IMR-90 (cell line): ENCODE measurements at regions of chr3 and their contacts with region 1.

Region 1: DNA sequence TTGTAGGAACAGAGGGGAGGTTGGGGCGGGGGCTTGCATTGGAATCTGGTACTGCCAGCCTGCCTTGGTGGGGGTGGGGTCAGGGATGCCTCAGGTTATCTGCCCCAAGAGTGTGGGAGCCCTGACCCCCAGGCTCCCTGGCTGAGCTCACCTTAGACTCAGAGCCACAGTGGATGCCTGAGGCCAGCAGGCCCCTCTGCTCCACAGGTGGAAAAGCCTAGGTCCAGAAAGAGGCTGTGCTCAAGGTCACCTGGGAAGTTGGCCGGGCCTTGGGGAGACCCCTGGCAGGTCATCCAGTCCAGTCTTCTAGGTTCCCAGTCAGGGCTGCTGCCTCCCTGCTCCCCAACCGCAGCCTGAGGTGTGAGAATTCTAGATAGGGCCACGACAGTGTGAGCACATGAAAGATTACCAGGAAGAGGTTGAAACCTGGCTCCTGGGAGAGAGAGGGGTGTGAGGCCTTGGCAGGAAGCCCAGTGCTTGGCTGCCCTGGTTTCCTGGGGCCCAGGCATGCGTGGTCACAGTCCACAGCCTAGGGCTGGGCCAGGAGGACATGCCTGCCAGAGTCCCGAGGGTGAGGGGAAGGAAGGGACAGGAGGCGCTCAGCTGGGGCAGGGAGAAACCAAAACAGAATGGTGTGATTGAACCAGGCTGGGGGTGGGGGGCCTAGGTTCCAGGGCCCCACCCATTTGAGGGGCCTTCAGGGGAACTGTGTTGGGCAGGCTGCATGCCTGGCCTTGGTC is 4.9 kb downstream of the HDAC11 start:
- DNase-seq: peak; percentile 33
- ATAC-seq: peak; percentile 33
- H3K4me3 ChIP-seq: no peak overlapping the region
- H3K27ac ChIP-seq: no peak overlapping the region
- H3K4me1 ChIP-seq: peaks cover 12% of the 10 kb centered on the region; the same call in 1 of the 2 replicates
- H3K27me3 ChIP-seq: no peaks in the 10 kb centered on the region
- CTCF ChIP-seq: no peak
- POLR2A ChIP-seq: no peak
- RAD21 ChIP-seq: no peak

Region 2: DNA sequence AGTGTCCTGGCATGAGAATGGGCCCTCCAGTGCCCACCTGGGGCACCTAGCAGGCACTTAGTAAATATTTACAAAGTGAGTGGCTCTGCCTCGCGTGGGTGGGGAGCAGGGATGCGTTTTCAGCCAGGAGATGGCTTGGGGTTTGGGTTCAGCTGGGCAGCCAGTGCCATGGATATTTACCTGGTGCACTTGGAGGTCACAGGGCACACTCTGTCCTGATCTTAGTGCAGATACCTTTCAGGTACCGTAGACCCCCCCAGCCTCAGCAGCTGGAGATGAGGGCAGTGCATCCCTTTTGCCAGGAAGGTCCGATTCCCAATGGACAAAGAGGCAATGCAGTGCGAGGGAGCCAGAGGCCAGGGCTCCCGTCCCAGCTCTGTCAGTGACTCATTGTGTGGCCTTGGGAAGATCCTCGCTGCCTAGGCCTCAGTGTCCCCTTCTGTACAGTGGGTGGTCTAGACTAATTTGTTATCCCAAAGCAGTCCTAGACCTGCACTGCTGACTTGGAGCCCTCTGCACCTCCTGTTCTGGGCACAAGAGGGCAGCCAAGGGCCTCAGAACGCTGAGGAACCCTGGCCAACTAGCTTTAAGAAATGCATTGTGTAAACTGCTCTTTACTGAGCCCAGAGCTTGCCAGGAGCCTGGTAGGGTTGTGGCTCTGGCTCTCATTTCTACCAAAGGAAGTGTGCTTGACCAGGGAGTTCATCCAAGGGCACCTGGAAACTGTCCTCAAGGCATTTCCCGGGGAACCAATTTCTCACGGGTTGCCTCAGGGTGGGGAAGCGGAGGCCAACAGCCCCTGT is 11.1 kb after region 1 on chr3:
- CTCF ChIA-PET with region 1: interaction called, 10 read pairs
- POLR2A ChIA-PET with region 1: no interaction called
- dilution Hi-C with region 1: no loop called
- in situ Hi-C with region 1: no loop called
- intact Hi-C with region 1: no loop called
- DNase-seq: peak; percentile 79
- ATAC-seq: peak; percentile 95
- H3K4me3 ChIP-seq: no peak overlapping the region
- H3K27ac ChIP-seq: no peak overlapping the region
- H3K4me1 ChIP-seq: 0 out of 2 replicates have a peak, but pooled peaks cover 1% of the 10 kb centered on the region
- H3K27me3 ChIP-seq: no peaks in the 10 kb centered on the region
- CTCF ChIP-seq: peak; percentile 98
- POLR2A ChIP-seq: peak; percentile 60; the same call in 1 of the 2 replicates
- RAD21 ChIP-seq: peak; percentile 100